Esophagus squamous epithelium (tissue), 5 donors: ENCODE measurements at regions of chr13 and their contacts with region 1.

Region 1: DNA sequence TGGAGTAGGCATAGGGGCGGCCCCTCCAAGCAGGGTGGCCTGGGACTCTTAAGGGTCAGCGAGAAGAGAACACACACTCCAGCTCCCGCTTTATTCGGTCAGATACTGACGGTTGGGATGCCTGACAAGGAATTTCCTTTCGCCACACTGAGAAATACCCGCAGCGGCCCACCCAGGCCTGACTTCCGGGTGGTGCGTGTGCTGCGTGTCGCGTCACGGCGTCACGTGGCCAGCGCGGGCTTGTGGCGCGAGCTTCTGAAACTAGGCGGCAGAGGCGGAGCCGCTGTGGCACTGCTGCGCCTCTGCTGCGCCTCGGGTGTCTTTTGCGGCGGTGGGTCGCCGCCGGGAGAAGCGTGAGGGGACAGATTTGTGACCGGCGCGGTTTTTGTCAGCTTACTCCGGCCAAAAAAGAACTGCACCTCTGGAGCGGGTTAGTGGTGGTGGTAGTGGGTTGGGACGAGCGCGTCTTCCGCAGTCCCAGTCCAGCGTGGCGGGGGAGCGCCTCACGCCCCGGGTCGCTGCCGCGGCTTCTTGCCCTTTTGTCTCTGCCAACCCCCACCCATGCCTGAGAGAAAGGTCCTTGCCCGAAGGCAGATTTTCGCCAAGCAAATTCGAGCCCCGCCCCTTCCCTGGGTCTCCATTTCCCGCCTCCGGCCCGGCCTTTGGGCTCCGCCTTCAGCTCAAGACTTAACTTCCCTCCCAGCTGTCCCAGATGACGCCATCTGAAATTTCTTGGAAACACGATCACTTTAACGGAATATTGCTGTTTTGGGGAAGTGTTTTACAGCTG is at the starts of genes BRCA2 and ZAR1L:
- DNase-seq: peak; percentile 51
- H3K4me3 ChIP-seq: peak within 1 kb of the TSS; percentile 62 to 81 (median 72)
- H3K27ac ChIP-seq: peak within 1 kb of the TSS; percentile 87 to 99 (median 94)
- H3K4me1 ChIP-seq: peaks cover 0 to 15% (median 0%) of the 10 kb centered on the region in 3 donors
- H3K27me3 ChIP-seq: no peaks in the 10 kb centered on the region
- CTCF ChIP-seq: peak in 2 of 6 experiments; percentile 4 to 7
- POLR2A ChIP-seq: peak in 3 of 4 donors; percentile 46 to 83 (median 76)
- total RNA-seq, gene BRCA2: 2.1 to 6.1 (median 4.1) TPM
- total RNA-seq, gene ZAR1L: not detected

Region 2: DNA sequence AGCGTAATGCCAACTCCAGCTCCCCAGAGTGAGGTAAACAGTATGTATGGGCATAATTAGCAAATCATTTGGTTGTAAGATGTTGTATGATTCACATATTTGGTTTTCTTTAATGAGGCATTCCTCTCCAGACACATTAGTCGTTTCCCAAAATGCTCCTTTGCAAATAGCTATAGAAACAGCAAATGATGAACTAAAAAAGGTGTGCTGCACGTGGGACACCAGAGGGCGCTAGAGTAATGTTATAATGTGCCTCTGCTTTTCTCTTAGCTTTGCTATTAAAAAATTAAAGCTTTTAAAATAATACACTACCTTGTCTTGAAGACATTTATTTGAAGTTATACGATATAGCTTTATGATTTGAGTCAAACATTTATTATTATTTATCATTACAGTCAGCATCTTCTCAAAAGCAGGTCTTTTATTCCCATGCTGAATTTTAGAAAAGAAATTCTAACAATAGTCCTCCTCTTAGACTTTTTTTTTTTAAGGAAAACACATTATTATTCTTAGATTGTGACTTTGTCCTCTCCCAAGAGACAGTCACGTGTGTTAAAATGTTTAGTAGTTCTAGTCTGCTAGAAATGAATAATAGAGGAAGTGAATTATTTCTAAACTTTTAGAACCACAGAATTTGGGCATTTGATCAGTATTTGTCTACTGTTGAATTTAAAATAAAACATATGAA is 405.4 kb before region 1 on chr13:
- intact Hi-C with region 1: loop called (anchors 10 kb)
- DNase-seq: no peak
- H3K4me3 ChIP-seq: no peak overlapping the region
- H3K27ac ChIP-seq: no peak overlapping the region
- H3K4me1 ChIP-seq: peaks cover 0 to 24% (median 4%) of the 10 kb centered on the region in 3 donors
- H3K27me3 ChIP-seq: no peaks in the 10 kb centered on the region
- CTCF ChIP-seq: peak; percentile 63 to 87 (median 80)
- POLR2A ChIP-seq: no peak

Region 3: GRCh38 chr13:32150794-32151193 is 164.6 kb before region 1 on chr13:
- intact Hi-C with region 1: no loop called
- DNase-seq: no peak
- H3K4me3 ChIP-seq: no peak overlapping the region
- H3K27ac ChIP-seq: peak overlapping the region in 3 of 4 donors; percentile 2 to 54 (median 40)
- H3K4me1 ChIP-seq: peaks cover 0 to 7% (median 0%) of the 10 kb centered on the region in 3 donors
- H3K27me3 ChIP-seq: no peaks in the 10 kb centered on the region
- CTCF ChIP-seq: no peak
- POLR2A ChIP-seq: no peak